Ascending aorta (tissue), 2 donors: ENCODE measurements at regions of chr19 and their contacts with region 1.

Region 1: DNA sequence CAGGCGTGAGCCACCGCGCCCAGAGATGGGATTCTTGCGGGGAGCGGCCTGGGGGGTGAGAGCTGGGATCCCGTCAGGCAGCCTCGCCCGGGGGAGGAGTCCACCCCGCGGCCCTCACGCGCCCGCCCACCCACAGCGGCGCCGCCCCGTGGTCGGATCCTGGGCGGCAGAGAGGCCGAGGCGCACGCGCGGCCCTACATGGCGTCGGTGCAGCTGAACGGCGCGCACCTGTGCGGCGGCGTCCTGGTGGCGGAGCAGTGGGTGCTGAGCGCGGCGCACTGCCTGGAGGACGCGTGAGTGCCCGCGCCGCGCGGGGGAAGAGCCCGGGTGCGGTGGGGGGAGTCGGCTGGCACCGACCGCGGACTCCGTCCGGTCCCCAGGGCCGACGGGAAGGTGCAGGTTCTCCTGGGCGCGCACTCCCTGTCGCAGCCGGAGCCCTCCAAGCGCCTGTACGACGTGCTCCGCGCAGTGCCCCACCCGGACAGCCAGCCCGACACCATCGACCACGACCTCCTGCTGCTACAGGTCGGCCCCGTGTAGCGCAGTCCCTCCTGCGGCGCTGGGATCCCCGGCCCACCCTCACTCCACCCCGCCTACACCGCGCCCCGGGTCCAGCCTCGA is 1.1 kb downstream of the CFD start:
- DNase-seq: no peak
- H3K4me3 ChIP-seq: peak overlapping the region; percentile 27 to 52
- H3K27ac ChIP-seq: no peak overlapping the region
- H3K4me1 ChIP-seq: peaks cover 0 to 11% of the 10 kb centered on the region in 2 donors
- H3K27me3 ChIP-seq: peaks cover 24% of the 10 kb centered on the region
- CTCF ChIP-seq: peak in 1 of 3 experiments; percentile 14

Region 2: GRCh38 chr19:920051-920864 is 59.7 kb after region 1 on chr19:
- intact Hi-C with region 1: loop called (anchors 2 kb)
- DNase-seq: no peak
- H3K4me3 ChIP-seq: peak overlapping the region; percentile 40 to 43
- H3K27ac ChIP-seq: no peak overlapping the region
- H3K4me1 ChIP-seq: peaks cover 12 to 37% of the 10 kb centered on the region in 2 donors
- H3K27me3 ChIP-seq: peaks cover 17% of the 10 kb centered on the region
- CTCF ChIP-seq: no peak